GM12878 (cell line): ENCODE measurements at regions of chr6 and their contacts with region 1.

Region 1: GRCh38 chr6:20334334-20334733 is 67.3 kb upstream of the E2F3 start:
- DNase-seq: no peak
- ATAC-seq: no peak
- H3K4me3 ChIP-seq: no peak overlapping the region
- H3K27ac ChIP-seq: no peak overlapping the region
- H3K4me1 ChIP-seq: no peaks in the 10 kb centered on the region
- H3K27me3 ChIP-seq: no peaks in the 10 kb centered on the region
- CTCF ChIP-seq: no peak
- EP300 ChIP-seq: no peak
- POLR2A ChIP-seq: no peak
- RAD21 ChIP-seq: no peak

Region 2: DNA sequence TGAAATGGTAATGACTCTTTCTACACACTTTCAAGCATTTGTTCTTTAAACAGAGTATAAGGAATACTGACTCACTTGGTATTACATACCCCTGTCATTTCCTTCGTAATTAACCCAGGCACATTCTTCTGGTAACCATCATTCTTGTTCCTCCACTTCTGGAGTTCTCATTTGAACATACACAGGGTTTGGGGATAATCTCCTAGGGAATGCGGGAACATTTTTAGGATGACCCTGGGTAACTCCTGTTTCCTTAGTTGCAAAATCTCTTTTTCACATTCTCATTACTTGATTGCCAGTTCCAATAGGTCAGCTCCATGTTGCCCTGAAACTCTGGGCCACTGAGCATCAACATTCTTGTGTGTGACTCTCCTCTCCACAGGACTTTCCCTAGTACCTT is 15.9 kb after region 1 on chr6:
- CTCF ChIA-PET with region 1: interaction called, 10 read pairs
- POLR2A ChIA-PET with region 1: no interaction called
- RAD21 ChIA-PET with region 1: no interaction called
- SMC1A ChIA-PET with region 1: interaction called, 8 read pairs
- in situ Hi-C with region 1: no loop called
- intact Hi-C with region 1: no loop called
- DNase-seq: no peak
- ATAC-seq: no peak
- H3K4me3 ChIP-seq: no peak overlapping the region
- H3K27ac ChIP-seq: no peak overlapping the region
- H3K4me1 ChIP-seq: no peaks in the 10 kb centered on the region; the same call in 1 of the 2 replicates
- H3K27me3 ChIP-seq: no peaks in the 10 kb centered on the region
- CTCF ChIP-seq: no peak
- EP300 ChIP-seq: no peak
- POLR2A ChIP-seq: no peak
- RAD21 ChIP-seq: no peak